ENCODE measurements at regions of chr9 and their contacts with region 1.

Region 1: DNA sequence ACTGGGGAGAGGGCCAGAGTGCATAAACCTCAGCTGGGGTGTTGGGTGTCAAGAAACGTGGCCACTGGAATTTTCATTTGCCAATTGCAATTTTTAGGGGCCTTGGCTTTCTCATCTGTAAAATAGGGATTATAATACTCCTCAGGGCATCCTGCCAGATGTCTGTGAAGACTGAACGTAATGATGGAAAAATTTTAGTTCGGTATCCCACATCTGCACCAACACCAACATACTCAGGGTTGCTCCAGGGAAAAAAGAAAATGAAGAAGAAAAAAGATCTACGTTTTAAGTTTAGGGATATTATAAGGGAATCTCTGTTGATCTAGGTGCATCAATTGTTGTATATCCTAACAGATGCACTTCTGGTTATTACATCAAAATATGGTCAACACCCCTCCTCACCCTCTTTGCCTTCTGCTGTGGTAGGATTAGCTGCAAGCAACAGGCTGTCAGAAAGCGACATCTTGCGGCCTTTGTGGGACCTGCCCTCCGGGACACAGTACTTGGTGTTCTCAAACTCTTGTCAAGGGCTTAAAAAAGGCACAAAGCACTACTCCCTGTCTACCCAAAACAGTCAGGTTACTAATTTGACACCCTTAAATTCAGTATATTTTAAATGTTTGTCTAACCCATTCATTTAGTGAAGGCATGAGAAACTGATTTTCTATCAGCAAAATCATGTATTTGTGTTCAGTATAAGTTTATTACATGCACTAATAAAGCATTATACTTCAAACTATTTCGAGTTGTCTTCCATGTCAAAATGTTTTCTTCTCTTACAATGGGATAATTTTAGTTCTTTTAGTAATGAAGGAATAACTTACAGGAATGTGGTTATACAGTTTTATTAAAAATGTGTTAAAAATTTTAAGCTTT is 8.3 kb upstream of the TBC1D2 start:
- DNase-seq: peak; percentile 75
- H3K4me3 Mint-ChIP-seq: no peak overlapping the region
- H3K27ac Mint-ChIP-seq: no peak overlapping the region
- H3K4me1 Mint-ChIP-seq: no peaks in the 10 kb centered on the region
- H3K27me3 Mint-ChIP-seq: peaks cover 21% of the 10 kb centered on the region
- CTCF ChIP-seq: peak; percentile 80

Region 2: GRCh38 chr9:97921959-97922724 is 341.6 kb before region 1 on chr9 and contains the start of gene TRMO:
- CTCF ChIA-PET with region 1: no interaction called
- intact Hi-C with region 1: loop called (anchors 5 kb)
- DNase-seq: peak; percentile 91
- H3K4me3 Mint-ChIP-seq: peak within 1 kb of the TSS; percentile 88
- H3K27ac Mint-ChIP-seq: peak within 1 kb of the TSS; percentile 99
- H3K4me1 Mint-ChIP-seq: peaks cover 19% of the 10 kb centered on the region
- H3K27me3 Mint-ChIP-seq: no peaks in the 10 kb centered on the region
- CTCF ChIP-seq: peak; percentile 33
- total RNA-seq, gene TRMO: 4.8 and 5.0 TPM in 2 replicates

Region 3: DNA sequence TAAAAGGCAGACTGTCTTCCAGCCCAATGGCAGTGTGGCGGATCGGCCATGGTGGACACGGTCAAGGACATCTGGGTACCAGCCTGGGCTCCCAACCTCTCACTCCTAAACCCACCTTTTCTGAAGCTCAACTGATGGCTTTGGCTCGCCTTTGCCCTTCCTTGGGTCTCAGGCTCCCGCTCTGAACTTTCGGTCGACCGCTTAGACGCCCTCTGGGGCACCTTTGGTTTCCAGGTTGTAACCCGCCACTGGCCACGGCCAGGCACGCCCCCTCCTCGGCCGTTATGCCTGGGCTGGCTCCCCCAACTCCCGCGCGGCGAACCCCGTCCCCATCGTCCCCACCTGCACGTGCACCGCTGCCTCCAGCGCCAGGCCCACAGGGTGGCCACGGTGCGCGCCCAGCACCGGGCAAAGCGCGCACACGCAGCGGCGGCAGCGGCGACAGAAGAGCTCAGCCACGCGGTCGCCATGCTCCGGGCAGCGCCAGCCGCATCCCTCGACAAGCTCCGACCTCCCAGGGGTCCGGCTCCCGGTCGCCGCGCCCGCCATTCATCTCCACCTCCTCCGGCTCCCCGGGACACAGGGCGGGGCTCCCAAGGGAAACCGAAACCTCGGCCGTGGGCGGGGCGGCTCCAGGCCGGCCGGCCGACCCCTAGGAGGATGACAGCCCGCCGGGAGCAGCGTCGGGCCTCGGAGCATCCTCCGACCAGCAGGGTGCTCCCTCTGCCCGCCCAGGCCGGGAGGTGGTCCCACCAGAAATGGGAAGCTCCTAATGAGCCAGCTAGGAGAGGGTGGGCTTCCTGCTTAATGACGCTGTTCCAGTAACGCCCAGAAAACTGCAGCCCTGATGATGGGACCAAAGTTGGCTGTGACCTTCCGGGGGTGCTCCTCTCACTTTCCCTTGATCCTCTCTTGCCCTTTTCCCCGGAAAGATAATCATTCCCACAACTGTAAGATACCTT is 144.8 kb before region 1 on chr9 and contains the start of gene TRIM14:
- CTCF ChIA-PET with region 1: interaction called, 7 read pairs
- intact Hi-C with region 1: loop called (anchors 5 kb)
- DNase-seq: peak; percentile 75
- H3K4me3 Mint-ChIP-seq: peak within 1 kb of the TSS; percentile 94
- H3K27ac Mint-ChIP-seq: peak within 1 kb of the TSS; percentile 87
- H3K4me1 Mint-ChIP-seq: peaks cover 27% of the 10 kb centered on the region
- H3K27me3 Mint-ChIP-seq: no peaks in the 10 kb centered on the region
- CTCF ChIP-seq: no peak
- total RNA-seq, gene TRIM14: 34.1 and 54.0 TPM in 2 replicates

Region 4: DNA sequence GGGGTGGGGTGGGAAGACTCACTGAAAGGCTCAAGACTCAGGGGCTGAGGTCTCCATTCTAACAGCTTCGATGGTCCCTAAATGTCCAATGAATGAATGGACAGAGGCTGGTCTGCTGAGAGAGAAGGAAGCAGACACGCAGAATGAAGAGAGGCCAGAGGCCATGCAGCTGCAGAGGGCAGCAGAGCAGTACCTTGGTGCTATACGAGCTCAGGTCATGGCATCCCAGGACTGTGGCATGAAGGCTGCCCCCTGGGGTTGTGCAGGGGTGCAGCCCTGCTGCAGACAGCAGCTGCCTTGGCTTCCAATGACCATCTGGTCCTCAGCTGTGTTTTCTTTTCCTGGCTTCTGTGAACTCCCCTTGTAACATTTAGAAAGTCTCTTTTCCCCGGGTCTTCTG is 56.1 kb before region 1 on chr9:
- CTCF ChIA-PET with region 1: no interaction called
- intact Hi-C with region 1: loop called (anchors 1 kb)
- DNase-seq: no peak
- H3K4me3 Mint-ChIP-seq: no peak overlapping the region
- H3K27ac Mint-ChIP-seq: no peak overlapping the region
- H3K4me1 Mint-ChIP-seq: no peaks in the 10 kb centered on the region
- H3K27me3 Mint-ChIP-seq: no peaks in the 10 kb centered on the region
- CTCF ChIP-seq: no peak

Measured in Calu3 (cell line).